CD8-positive, alpha-beta T cell (primary cell): ENCODE measurements at regions of chr6 and their contacts with region 1.

Region 1: DNA sequence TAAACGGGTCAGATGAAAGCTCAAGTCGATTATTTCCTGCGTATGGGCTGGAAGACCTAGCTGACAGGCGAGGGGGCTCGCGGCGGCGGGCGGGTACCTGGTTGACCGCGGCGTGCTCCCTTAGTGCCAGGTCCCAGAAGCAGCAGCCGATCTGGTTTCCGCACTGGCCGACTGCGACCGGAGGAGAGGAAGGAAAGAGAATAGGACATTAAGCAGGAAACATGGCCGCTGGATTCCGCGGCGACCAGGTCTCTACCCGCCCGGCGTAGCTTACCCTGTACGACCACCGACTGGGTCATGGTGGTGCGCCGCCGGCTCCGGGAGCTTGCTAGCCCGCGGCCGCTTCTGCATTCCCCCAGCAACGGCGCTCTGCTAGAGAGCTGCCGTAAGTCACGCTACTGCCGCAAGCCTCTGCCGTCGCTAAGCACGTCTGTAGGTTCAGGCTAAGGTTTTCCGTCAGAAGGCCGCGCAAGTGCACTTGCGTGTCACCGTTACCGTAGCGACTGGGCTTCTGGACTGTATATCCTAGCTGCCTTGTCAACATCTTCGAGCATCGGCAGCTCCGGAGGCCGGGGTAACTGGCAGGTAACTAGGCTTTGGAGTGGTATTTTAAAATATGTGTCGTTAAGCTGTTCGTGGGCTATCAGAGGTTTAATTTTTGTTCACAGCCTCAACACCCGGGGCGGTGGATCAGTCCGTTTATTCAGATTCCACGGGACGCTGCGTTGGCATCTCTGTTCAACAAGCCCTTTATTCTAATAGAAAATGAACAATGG is at the starts of genes FAM229B and TUBE1:
- DNase-seq: peak; percentile 82 to 97 (median 89)
- ATAC-seq: peak; percentile 97
- H3K4me3 ChIP-seq: peak within 1 kb of the TSS; percentile 75 to 80
- H3K4me3 Mint-ChIP-seq: no peak within 1 kb of the TSS
- H3K27ac ChIP-seq: peak within 1 kb of the TSS; percentile 89 to 97
- H3K27ac Mint-ChIP-seq: no peak within 1 kb of the TSS
- H3K4me1 ChIP-seq: peaks cover 9% of the 10 kb centered on the region
- H3K4me1 Mint-ChIP-seq: peaks cover 12% of the 10 kb centered on the region
- H3K27me3 ChIP-seq: no peaks in the 10 kb centered on the region
- H3K27me3 Mint-ChIP-seq: peaks cover 3% of the 10 kb centered on the region
- CTCF ChIP-seq: no peak
- total RNA-seq, gene FAM229B: 3.1 to 3.3 TPM
- total RNA-seq, gene TUBE1: 25.6 to 30.5 TPM

Region 2: DNA sequence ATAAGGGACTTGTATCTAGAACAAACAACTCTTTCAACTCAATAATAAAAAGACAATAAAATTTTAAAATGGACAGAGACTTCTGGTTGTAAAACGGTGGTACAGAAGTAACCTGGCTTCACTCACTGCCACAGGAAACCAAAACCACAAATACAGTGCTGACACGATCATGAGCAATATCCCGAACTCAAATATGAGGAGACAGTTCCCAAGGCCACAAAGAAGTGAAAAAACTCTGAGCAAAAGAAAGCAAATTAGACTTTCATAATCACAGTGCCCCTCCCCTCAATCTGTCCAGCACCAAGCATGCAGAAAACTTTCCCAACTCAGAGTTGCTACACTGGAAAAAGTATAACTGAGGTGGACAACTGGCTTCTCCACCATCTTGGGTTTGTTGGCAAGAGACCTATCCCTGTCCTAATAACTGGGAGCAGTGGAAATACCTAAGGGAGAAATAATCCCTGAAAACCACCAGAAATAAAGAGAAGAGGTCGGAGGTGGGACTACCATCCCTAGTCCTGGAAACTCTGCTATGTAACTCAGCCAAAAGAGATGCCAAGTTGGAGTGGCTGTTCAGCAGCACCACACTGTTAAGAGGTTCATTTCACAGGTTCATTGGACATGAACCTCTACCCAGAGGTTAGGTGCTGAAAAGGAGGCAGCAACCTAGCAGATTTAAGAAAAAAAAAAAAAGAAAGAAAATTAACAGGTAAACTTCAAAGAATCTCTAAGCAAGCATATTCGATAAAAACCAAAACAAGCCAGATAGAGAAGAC is 659.8 kb before region 1 on chr6:
- CTCF ChIA-PET with region 1: no interaction called
- POLR2A ChIA-PET with region 1: no interaction called
- intact Hi-C with region 1: no loop called
- DNase-seq: peak in 3 of 9 experiments; percentile 17 to 49 (median 23)
- ATAC-seq: peak; percentile 51
- H3K4me3 ChIP-seq: no peak overlapping the region
- H3K4me3 Mint-ChIP-seq: peak overlapping the region; percentile 62
- H3K27ac ChIP-seq: no peak overlapping the region
- H3K27ac Mint-ChIP-seq: no peak overlapping the region
- H3K4me1 ChIP-seq: peaks cover 6% of the 10 kb centered on the region
- H3K4me1 Mint-ChIP-seq: peaks cover 57% of the 10 kb centered on the region
- H3K27me3 ChIP-seq: no peaks in the 10 kb centered on the region
- H3K27me3 Mint-ChIP-seq: no peaks in the 10 kb centered on the region
- CTCF ChIP-seq: no peak

Region 3: DNA sequence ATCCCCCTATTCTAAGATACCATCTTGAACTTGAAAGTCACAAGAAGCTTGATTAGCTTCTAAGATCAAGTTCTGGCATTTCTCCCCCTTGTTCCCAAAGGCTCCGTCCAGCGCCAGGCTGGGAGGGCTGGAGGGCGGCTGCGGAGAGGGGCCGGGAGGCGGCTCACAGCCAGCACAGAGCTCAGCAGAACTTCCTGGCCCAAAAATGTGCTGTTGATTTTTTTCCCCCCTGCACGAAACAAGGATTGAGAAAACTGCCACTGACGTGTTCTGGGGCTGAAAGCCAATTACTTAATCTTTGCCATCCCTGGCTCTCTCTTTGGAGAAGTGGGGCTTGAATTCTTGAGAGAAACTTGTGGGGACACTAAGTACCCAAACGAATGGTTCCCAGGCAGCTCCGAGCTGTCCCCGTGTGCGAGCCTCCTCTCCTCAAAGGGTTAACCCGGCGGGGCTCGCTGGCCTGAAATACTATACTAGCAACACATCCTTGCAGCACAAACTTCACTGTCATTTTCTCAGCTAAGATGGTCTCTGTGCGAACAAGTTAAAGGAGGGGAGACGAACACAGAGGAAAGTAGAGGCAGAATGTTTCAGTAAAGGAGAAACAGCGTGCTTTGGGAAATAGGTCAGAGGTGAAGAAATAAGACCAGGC is 482.1 kb before region 1 on chr6:
- CTCF ChIA-PET with region 1: no interaction called
- POLR2A ChIA-PET with region 1: interaction called, 5 read pairs
- intact Hi-C with region 1: loop called in 1 of 2 experiments (anchors 5 kb)
- DNase-seq: peak in 6 of 9 experiments; percentile 9 to 51 (median 21)
- ATAC-seq: peak; percentile 58
- H3K4me3 ChIP-seq: peak overlapping the region; percentile 51 to 63
- H3K4me3 Mint-ChIP-seq: peak overlapping the region; percentile 95
- H3K27ac ChIP-seq: peak overlapping the region; percentile 76 to 80
- H3K27ac Mint-ChIP-seq: peak overlapping the region; percentile 95
- H3K4me1 ChIP-seq: peaks cover 22% of the 10 kb centered on the region
- H3K4me1 Mint-ChIP-seq: peaks cover 60% of the 10 kb centered on the region
- H3K27me3 ChIP-seq: no peaks in the 10 kb centered on the region
- H3K27me3 Mint-ChIP-seq: no peaks in the 10 kb centered on the region
- CTCF ChIP-seq: no peak